ENCODE measurements at regions of chr3 and their contacts with region 1.

Region 1: GRCh38 chr3:134331008-134331830 is 43.0 kb downstream of the AMOTL2 start:
- DNase-seq: peak in 1 of 5 donors; percentile 33
- ATAC-seq: peak in 2 of 4 donors; percentile 18 to 30
- H3K4me3 ChIP-seq: no peak overlapping the region
- H3K27ac ChIP-seq: peak overlapping the region in 7 of 12 donors; percentile 3 to 60 (median 30)
- H3K4me1 ChIP-seq: peaks cover 2 to 71% (median 54%) of the 10 kb centered on the region in 12 donors
- H3K27me3 ChIP-seq: no peaks in the 10 kb centered on the region
- CTCF ChIP-seq: no peak
- POLR2A ChIP-seq: no peak

Region 2: GRCh38 chr3:134350861-134351333 is 19.7 kb after region 1 on chr3:
- intact Hi-C with region 1: loop called in 1 of 10 experiments (anchors 2 kb)
- DNase-seq: peak in 1 of 5 donors; percentile 18
- ATAC-seq: peak in 1 of 4 donors; percentile 8
- H3K4me3 ChIP-seq: no peak overlapping the region
- H3K27ac ChIP-seq: peak overlapping the region in 5 of 12 donors; percentile 0 to 57 (median 20)
- H3K4me1 ChIP-seq: peaks cover 0 to 72% (median 39%) of the 10 kb centered on the region in 12 donors
- H3K27me3 ChIP-seq: no peaks in the 10 kb centered on the region
- CTCF ChIP-seq: no peak
- POLR2A ChIP-seq: no peak